Left cardiac atrium (tissue), 4 donors: ENCODE measurements at regions of chr21 and their contacts with region 1.

Region 1: DNA sequence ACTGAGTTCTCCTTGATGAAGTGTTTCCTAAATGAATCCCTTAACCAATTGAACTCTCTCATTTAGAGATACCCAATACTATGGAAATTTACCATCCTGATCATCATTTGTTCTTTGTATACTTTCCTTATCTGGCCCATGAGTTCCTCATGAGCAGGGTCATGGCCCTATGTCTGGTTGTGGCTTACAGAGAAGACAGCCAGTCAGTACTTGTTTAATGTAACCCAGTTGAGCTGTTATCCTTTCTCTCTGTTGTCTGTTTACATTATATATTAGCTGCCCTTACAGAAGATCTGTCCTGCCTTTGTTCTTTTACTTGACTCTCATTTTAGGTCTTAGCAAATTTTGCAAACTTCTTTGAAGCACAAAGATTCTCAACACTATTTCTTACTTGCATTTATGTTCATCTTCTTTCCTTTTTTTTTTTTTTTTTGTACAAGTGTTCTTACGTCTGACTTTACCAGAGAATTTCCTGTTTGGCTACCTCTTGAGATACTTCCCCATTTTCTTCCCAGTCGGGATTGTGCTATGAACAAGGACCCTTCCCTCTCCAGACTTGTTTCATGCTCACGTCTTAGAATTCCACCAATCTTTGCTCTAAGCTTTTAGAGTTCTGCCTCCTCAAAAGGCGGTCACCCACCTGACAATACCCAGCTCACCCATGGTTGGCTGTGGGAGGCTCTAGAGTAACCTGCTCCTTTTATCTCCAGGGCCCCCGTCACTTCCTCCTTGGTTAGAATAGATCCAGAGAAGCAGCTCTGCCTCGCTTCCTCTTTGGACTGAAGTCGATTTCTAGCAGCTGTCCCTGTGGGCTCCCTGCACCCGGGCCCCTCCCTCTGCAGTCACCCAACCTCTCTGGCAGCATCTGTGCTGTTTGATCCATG is 53.6 kb upstream of the RUNX1 start:
- DNase-seq: peak; percentile 41
- ATAC-seq: peak; percentile 31 to 32

Region 2: GRCh38 chr21:35226948-35227744 is 124.4 kb after region 1 on chr21:
- intact Hi-C with region 1: no loop called
- DNase-seq: no peak
- ATAC-seq: no peak

Region 3: DNA sequence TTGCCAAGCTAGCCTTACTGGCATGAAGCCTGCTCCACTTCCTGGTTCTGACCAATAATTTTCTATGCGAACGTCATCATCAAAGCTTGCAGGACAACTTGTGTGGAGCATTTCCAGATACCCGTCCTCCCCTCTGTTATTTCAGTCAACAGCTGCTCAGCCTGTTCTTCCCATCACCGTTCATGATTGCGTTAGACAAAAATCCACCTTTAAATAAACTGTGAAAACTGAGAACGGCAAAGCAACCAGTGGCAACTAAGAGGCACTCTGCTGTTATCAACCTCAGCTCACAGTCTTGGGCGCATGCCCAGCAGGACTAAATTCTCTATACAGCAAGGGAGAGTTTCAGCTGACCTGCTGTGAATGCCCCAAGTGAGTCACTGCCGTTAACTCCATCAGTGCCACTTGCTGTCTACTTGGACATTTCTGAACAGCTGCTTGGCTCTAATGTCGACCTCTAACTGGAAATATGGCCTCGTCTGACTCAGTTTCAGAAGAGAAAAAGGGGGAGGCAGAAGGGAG is 153.8 kb after region 1 on chr21:
- intact Hi-C with region 1: loop called in 1 of 2 experiments (anchors 2 kb)
- DNase-seq: peak; percentile 94
- ATAC-seq: peak; percentile 95 to 98